Caco-2 (cell line): ENCODE measurements at regions of chr1 and their contacts with region 1.

Region 1: DNA sequence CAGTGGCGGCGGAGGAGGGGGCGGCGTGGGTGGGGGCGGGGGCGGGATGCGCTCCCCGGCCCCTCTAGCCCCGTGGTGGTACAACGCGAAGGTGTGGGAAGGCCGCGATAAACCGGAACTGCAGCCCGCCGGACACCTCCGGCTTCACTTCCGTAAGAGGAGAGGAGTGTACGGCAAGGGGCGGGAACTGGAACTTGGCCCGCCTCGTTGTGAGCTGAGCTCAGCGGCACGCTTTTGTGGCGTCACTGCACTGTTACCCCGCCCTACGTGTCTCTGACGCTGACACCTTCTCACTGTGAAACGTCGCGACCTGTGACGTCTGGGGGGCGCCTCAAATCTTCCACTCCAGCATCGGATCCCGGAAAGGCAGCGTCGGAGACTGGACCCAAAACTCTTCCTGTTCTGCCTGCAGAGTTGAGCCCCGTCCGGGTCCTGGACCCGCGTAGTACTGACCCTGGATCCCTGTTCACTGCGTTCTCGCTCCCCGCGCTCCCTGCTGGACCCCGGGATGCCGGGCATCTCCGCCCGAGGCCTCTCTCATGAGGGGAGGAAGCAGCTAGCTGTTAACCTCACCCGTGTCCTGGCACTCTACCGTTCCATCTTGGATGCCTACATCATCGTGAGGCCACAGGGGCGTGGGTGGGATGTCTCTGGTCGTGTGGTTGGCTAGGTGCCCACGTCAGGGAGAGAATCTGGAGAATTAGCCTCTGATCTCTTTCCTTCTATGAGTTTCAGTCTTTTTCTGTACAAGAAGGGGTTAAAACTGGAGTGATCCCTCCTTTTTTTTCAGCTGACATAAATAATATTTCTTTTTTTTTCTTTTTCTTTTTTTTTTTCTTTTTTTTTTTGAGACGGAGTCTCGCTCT is at the start of gene ISG20L2:
- DNase-seq: peak; percentile 95 to 96
- H3K4me3 ChIP-seq: peak within 1 kb of the TSS; percentile 90
- H3K4me3 Mint-ChIP-seq: no peak within 1 kb of the TSS
- H3K27ac Mint-ChIP-seq: peak within 1 kb of the TSS; percentile 96
- H3K4me1 ChIP-seq: peaks cover 13% of the 10 kb centered on the region; the same call in 1 of the 2 replicates
- H3K4me1 Mint-ChIP-seq: peaks cover 6% of the 10 kb centered on the region
- H3K27me3 ChIP-seq: no peaks in the 10 kb centered on the region
- H3K27me3 Mint-ChIP-seq: no peaks in the 10 kb centered on the region
- CTCF ChIP-seq: no peak
- total RNA-seq, gene ISG20L2: 42.3 and 44.1 TPM in 2 replicates

Region 2: GRCh38 chr1:156677616-156678596 is 50.9 kb before region 1 on chr1:
- CTCF ChIA-PET with region 1: interaction called, 14 read pairs
- POLR2A ChIA-PET with region 1: interaction called, 15 read pairs
- intact Hi-C with region 1: no loop called
- DNase-seq: peak; percentile 75 to 79
- H3K4me3 ChIP-seq: peak overlapping the region; percentile 69
- H3K4me3 Mint-ChIP-seq: peak overlapping the region; percentile 86
- H3K27ac Mint-ChIP-seq: peak overlapping the region; percentile 75
- H3K4me1 ChIP-seq: peaks cover 21% of the 10 kb centered on the region; the same call in 1 of the 2 replicates
- H3K4me1 Mint-ChIP-seq: no peaks in the 10 kb centered on the region
- H3K27me3 ChIP-seq: 0 out of 2 replicates have a peak, but pooled peaks cover 2% of the 10 kb centered on the region
- H3K27me3 Mint-ChIP-seq: peaks cover 8% of the 10 kb centered on the region
- CTCF ChIP-seq: peak; percentile 78 to 87

Region 3: GRCh38 chr1:156740679-156741612 is 12.1 kb after region 1 on chr1 and contains the start of gene MRPL24:
- CTCF ChIA-PET with region 1: interaction called, 32 read pairs
- POLR2A ChIA-PET with region 1: interaction called, 108 read pairs
- intact Hi-C with region 1: loop called (anchors 1 kb)
- DNase-seq: peak; percentile 97 to 99
- H3K4me3 ChIP-seq: peak within 1 kb of the TSS; percentile 62
- H3K4me3 Mint-ChIP-seq: peak within 1 kb of the TSS; percentile 100
- H3K27ac Mint-ChIP-seq: peak within 1 kb of the TSS; percentile 98
- H3K4me1 ChIP-seq: peaks cover 16% of the 10 kb centered on the region
- H3K4me1 Mint-ChIP-seq: peaks cover 25% of the 10 kb centered on the region
- H3K27me3 ChIP-seq: no peaks in the 10 kb centered on the region
- H3K27me3 Mint-ChIP-seq: no peaks in the 10 kb centered on the region
- CTCF ChIP-seq: no peak
- total RNA-seq, gene MRPL24: 52.6 and 54.2 TPM in 2 replicates

Region 4: DNA sequence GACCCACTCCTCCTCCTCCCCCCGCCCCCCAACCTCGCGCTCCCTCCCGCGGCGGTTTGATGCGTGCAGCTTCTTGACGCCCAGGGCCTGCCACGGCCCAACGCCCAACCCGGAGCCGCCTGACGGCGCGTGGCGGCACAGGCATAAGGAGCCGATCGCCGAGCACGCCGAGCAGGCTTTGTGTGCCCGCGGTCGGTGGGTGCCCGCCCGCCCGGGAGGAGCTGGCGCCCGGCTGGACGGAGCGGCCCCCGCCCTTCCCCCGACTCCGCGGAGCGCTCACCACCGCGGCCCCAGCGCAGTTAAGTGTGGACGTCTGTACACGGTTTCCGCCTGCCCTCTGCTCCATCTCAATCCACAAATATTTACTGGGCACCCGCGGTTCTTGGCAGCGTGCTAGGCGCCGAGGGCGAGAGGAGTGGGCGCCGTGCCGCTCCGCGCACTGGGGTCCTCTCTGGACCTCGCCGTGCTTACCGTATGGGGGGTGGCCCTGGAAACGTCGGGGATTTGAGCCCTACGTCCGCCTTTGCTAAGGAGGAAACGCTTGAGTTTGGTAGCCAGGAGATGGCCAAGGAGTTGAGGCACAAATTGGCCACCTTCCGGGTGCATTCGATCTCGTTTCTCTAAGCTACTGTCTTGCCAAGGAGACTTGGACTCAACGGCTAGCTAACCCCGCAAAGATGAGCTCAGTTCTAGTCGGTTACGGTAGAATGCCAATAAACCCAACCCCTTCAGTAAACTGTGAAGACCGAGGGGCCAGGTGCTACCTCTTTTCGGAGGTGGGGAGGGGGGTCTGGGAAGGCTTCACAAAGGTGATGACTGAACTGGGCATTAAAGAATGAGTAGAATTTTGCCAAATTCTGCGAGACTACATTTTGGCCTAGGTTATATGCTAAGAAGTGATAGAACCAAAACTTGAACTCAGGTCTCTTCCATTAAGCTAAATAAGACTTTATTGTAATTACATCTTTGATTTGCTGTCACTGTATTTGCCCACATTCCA is 23.2 kb after region 1 on chr1:
- CTCF ChIA-PET with region 1: interaction called, 19 read pairs
- POLR2A ChIA-PET with region 1: interaction called, 74 read pairs
- intact Hi-C with region 1: loop called (anchors 1 kb)
- DNase-seq: peak; percentile 96 to 99
- H3K4me3 ChIP-seq: peak overlapping the region; percentile 55
- H3K4me3 Mint-ChIP-seq: peak overlapping the region; percentile 79
- H3K27ac Mint-ChIP-seq: peak overlapping the region; percentile 100
- H3K4me1 ChIP-seq: peaks cover 34% of the 10 kb centered on the region
- H3K4me1 Mint-ChIP-seq: peaks cover 21% of the 10 kb centered on the region
- H3K27me3 ChIP-seq: no peaks in the 10 kb centered on the region
- H3K27me3 Mint-ChIP-seq: no peaks in the 10 kb centered on the region
- CTCF ChIP-seq: peak in 1 of 2 experiments; percentile 23

Region 5: DNA sequence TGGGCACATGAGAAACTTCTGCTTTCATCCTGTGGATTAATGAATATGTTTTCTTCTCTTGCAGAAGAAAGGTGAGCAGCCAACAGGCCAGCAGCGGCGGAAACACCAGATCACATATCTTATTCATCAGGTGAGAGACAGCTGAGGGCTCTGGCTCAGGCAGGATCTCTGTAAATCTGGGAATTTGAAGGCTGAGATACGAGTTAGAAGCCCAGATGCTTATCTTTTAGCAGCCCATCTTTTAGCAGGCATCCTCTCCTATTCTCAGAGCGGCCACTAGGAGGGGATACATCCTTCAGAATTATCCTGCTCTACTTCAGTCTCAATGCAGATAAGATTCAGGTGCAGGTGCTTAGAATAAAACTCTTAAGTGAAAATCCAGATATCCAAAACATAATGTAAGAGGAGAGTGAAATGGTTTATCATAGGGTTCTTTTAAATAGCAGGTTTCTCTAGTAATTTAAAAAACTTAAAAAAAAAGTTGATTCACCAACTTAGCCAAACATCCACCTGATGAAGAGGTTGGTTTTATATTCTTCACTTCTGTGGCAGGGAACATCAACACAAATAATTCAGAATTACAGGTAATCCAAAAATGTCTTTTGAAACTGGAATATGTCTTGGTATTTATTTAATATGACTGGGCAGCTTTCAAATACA is 68.5 kb after region 1 on chr1:
- CTCF ChIA-PET with region 1: interaction called, 6 read pairs
- POLR2A ChIA-PET with region 1: no interaction called
- intact Hi-C with region 1: loop called (anchors 1 kb)
- DNase-seq: peak; percentile 53 to 68
- H3K4me3 ChIP-seq: no peak overlapping the region
- H3K4me3 Mint-ChIP-seq: no peak overlapping the region
- H3K27ac Mint-ChIP-seq: no peak overlapping the region
- H3K4me1 ChIP-seq: no peaks in the 10 kb centered on the region
- H3K4me1 Mint-ChIP-seq: no peaks in the 10 kb centered on the region
- H3K27me3 ChIP-seq: no peaks in the 10 kb centered on the region
- H3K27me3 Mint-ChIP-seq: no peaks in the 10 kb centered on the region
- CTCF ChIP-seq: peak; percentile 72 to 81

Region 6: GRCh38 chr1:156892190-156893047 is 163.6 kb after region 1 on chr1:
- CTCF ChIA-PET with region 1: interaction called, 4 read pairs
- POLR2A ChIA-PET with region 1: interaction called, 3 read pairs
- intact Hi-C with region 1: loop called (anchors 1 kb)
- DNase-seq: peak; percentile 91 to 95
- H3K4me3 ChIP-seq: no peak overlapping the region; the same call in 1 of the 2 replicates
- H3K4me3 Mint-ChIP-seq: peak overlapping the region; percentile 59
- H3K27ac Mint-ChIP-seq: no peak overlapping the region
- H3K4me1 ChIP-seq: peaks cover 38% of the 10 kb centered on the region
- H3K4me1 Mint-ChIP-seq: peaks cover 23% of the 10 kb centered on the region
- H3K27me3 ChIP-seq: no peaks in the 10 kb centered on the region
- H3K27me3 Mint-ChIP-seq: peaks cover 12% of the 10 kb centered on the region
- CTCF ChIP-seq: peak; percentile 83 to 89